ENCODE measurements at regions of chr2 and their contacts with region 1.

Region 1: GRCh38 chr2:120312861-120313694 is 32.9 kb upstream of the INHBB start:
- DNase-seq: peak; percentile 90
- H3K4me3 ChIP-seq: peak overlapping the region; percentile 27 to 71 (median 57)
- H3K27ac ChIP-seq: no peak overlapping the region
- H3K4me1 ChIP-seq: peaks cover 16% of the 10 kb centered on the region
- H3K27me3 ChIP-seq: no peaks in the 10 kb centered on the region
- CTCF ChIP-seq: peak; percentile 86 to 91
- POLR2A ChIP-seq: peak; percentile 16

Region 2: GRCh38 chr2:119826370-119826961 is 486.6 kb before region 1 on chr2:
- CTCF ChIA-PET with region 1: interaction called, 5 read pairs
- POLR2A ChIA-PET with region 1: no interaction called
- dilution Hi-C with region 1: no loop called
- intact Hi-C with region 1: loop called (anchors 10 kb)
- DNase-seq: peak; percentile 49
- H3K4me3 ChIP-seq: no peak overlapping the region
- H3K27ac ChIP-seq: no peak overlapping the region
- H3K4me1 ChIP-seq: peaks cover 9% of the 10 kb centered on the region
- H3K27me3 ChIP-seq: no peaks in the 10 kb centered on the region
- CTCF ChIP-seq: peak; percentile 68 to 71
- POLR2A ChIP-seq: no peak

Region 3: DNA sequence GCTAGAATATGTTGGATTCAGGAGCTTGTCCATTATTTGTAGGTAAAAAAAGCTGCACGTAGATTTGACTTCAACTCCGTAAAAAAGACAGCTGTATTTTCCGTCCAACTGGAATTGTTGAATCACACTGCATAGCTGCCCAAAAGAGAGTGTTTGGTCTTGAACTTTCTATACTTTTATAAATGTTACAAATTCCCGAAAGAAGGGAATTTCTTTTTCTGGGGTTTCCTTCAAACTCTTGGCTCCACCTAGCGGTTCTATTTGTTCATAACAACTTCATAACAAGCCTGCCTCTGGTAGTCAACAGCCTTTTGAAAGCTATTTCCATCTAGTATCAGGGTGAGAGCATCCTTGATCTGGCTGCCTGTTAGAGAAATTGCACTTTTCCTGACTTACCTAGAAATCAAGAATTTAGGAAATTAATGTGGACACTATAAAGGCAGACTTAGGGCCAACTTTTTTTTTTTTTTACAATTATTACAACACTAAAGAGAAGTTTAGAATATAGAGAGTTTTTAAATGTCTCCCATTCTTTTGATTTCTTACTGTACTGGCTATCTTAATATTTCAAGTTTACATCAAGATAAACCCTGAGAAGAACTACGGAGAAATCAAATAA is 138.0 kb before region 1 on chr2:
- CTCF ChIA-PET with region 1: interaction called, 71 read pairs
- POLR2A ChIA-PET with region 1: no interaction called
- dilution Hi-C with region 1: no loop called
- intact Hi-C with region 1: loop called (anchors 1 kb)
- DNase-seq: peak; percentile 75
- H3K4me3 ChIP-seq: no peak overlapping the region
- H3K27ac ChIP-seq: no peak overlapping the region
- H3K4me1 ChIP-seq: no peaks in the 10 kb centered on the region
- H3K27me3 ChIP-seq: no peaks in the 10 kb centered on the region
- CTCF ChIP-seq: peak; percentile 46 to 57
- POLR2A ChIP-seq: no peak

Region 4: DNA sequence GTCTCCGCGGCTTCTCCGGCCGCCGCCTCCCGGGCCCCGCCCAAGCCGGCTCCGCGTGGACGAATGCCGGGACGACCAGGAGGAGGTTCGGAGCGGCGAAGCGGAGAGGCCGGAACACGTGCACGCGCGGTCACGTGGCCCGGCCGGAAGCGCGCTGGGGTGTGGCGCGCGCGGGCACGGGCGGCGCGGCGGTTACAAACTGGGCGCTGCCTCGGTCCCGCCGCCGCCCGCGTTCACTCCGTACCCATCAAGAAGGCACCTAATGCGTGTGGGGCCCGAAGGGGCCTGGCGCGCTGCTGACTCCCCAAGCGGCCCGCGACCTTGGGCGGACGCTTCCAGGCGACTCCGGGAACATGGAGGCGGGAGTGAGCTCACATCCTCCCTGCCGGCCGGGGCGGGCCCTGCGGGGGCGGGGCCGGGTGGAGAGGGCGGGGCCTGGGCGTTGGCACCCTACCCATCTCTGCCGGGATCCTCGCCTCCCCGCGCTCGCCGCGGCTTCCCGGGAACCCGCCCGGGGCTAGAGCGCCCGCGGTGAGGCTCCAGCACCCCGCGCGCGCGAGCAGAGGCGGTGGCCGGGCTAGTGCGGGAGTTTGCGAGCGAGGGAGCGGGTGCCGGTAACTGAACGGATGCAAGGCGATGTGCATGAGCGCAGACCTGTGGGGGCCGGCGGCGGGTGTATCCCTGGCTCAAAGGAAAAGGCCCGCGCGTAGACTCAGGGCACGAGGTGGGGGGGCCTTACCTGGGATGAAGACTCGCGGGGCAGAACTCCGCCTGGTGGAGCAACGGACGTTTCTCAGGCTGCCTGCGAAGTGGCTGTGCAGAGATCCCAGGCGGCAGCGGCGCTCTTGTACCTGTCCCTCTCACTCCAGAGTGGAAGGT is 89.8 kb before region 1 on chr2 and contains the start of gene TMEM185B:
- CTCF ChIA-PET with region 1: interaction called, 18 read pairs
- POLR2A ChIA-PET with region 1: no interaction called
- dilution Hi-C with region 1: no loop called
- intact Hi-C with region 1: loop called (anchors 1 kb)
- DNase-seq: peak; percentile 78
- H3K4me3 ChIP-seq: peak within 1 kb of the TSS; percentile 47 to 61 (median 57)
- H3K27ac ChIP-seq: peak within 1 kb of the TSS; percentile 78
- H3K4me1 ChIP-seq: peaks cover 17% of the 10 kb centered on the region
- H3K27me3 ChIP-seq: peaks cover 0 to 3% of the 10 kb centered on the region in 2 experiments
- CTCF ChIP-seq: peak; percentile 24 to 55
- POLR2A ChIP-seq: peak; percentile 72
- total RNA-seq, gene TMEM185B: 23.9 and 29.9 TPM in 2 replicates

Region 5: DNA sequence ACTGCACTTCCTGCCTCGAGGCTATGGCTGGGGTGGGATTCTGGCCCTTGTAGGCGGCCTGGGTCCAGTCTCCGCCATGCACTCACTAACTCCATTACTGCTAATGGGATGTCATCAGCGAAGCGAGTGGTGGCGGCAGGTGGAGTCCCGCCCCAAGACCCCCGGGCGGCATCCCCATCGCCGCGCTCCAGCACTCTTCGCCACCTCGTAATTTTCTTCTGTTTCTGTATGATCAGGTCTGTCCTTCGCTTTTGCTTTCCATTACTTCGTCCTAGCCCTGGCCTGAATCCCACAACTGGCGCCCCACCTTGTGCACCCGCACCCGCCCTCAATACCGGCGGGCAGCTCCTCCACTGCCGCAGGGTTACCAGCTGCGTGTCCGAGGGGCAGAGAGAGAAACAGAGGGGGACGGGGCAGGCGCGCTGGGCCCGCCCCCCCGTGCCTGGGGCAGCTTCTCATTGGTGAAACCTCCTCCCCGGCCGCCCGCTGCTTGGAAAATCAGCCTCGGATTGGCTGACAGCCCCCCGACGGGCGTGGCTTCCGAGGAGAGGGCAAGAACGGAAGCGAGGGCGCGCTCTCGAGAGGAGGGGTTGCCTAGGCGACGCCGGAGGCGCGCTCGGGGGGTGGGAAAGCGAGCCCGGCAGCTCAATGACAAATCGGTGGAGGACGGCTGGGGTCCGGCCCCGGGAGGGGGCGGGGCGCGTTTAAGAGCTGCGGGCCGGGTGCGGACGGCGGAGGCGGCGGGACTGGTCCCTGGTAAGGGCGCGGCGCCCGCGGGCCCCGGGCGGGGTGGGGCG is 60.7 kb before region 1 on chr2 and contains the start of gene RALB:
- CTCF ChIA-PET with region 1: interaction called, 41 read pairs
- POLR2A ChIA-PET with region 1: interaction called, 3 read pairs
- dilution Hi-C with region 1: no loop called
- intact Hi-C with region 1: loop called (anchors 1 kb)
- DNase-seq: peak; percentile 100
- H3K4me3 ChIP-seq: peak within 1 kb of the TSS; percentile 47 to 83 (median 67)
- H3K27ac ChIP-seq: peak within 1 kb of the TSS; percentile 58
- H3K4me1 ChIP-seq: peaks cover 49% of the 10 kb centered on the region
- H3K27me3 ChIP-seq: no peaks in the 10 kb centered on the region
- CTCF ChIP-seq: no peak
- POLR2A ChIP-seq: peak; percentile 70
- total RNA-seq, gene RALB: 106 and 115 TPM in 2 replicates

Region 6: GRCh38 chr2:120552800-120553481 is 239.9 kb after region 1 on chr2:
- CTCF ChIA-PET with region 1: no interaction called
- POLR2A ChIA-PET with region 1: no interaction called
- dilution Hi-C with region 1: no loop called
- intact Hi-C with region 1: loop called (anchors 1 kb)
- DNase-seq: peak; percentile 97
- H3K4me3 ChIP-seq: no peak overlapping the region
- H3K27ac ChIP-seq: no peak overlapping the region
- H3K4me1 ChIP-seq: peaks cover 13% of the 10 kb centered on the region
- H3K27me3 ChIP-seq: peaks cover 15% of the 10 kb centered on the region in 2 experiments
- CTCF ChIP-seq: peak; percentile 71 to 85
- POLR2A ChIP-seq: no peak